WTC11 (cell line): ENCODE measurements at regions of chr19 and their contacts with region 1.

Region 1: DNA sequence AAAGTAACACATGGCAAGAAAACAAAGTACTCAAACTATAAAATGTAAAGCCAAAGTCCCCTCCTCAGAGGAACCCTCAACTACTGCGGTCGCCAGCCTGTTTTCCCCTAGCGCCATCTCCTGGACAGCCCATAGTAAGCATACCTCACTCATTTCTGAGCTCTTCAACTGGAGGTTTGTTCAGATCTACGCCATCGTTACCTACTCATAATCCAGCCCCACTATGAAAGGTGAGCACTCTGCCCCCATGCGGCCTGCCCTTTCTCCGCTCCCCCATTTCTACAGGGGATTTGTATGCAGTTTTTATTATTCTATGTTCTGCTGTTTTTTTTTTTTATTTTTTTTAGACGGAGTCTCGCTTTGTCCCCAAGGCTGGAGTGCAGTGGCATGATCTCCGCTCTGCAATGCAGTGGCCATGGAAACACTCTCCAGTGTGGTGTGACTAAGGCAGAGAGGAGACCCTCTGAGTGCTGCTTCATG is 26.2 kb downstream of the OPA3 start:
- DNase-seq: peak; percentile 78
- ATAC-seq: peak; percentile 89
- H3K4me3 Mint-ChIP-seq: no peak overlapping the region
- H3K27ac Mint-ChIP-seq: no peak overlapping the region
- H3K4me1 Mint-ChIP-seq: peaks cover 12% of the 10 kb centered on the region; the same call in 1 of the 2 replicates
- H3K27me3 Mint-ChIP-seq: no peaks in the 10 kb centered on the region
- CTCF ChIP-seq: no peak

Region 2: GRCh38 chr19:45455707-45456499 is 102.5 kb before region 1 on chr19:
- CTCF ChIA-PET with region 1: no interaction called
- POLR2A ChIA-PET with region 1: no interaction called
- DNase-seq: peak; percentile 78
- ATAC-seq: peak; percentile 93
- H3K4me3 Mint-ChIP-seq: no peak overlapping the region
- H3K27ac Mint-ChIP-seq: peak overlapping the region; percentile 78
- H3K4me1 Mint-ChIP-seq: peaks cover 14% of the 10 kb centered on the region
- H3K27me3 Mint-ChIP-seq: peaks cover 37% of the 10 kb centered on the region
- CTCF ChIP-seq: no peak

Region 3: DNA sequence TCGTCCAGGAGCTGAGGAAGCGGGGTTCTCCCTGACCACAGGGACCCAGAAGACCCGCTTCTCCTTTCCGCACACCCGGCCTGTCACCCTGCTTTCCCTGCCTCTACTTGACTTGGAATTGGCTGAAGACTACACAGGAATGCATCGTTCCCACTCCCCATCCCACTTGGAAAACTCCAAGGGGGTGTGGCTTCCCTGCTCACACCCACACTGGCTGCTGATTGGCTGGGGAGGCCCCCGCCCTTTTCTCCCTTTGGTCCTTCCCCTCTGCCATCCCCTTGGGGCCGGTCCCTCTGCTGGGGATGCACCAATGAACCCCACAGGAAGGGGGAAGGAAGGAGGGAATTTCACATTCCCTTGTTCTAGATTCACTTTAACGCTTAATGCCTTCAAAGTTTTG is 32.3 kb before region 1 on chr19:
- CTCF ChIA-PET with region 1: interaction called, 92 read pairs
- POLR2A ChIA-PET with region 1: interaction called, 5 read pairs
- DNase-seq: peak; percentile 93
- ATAC-seq: peak; percentile 46
- H3K4me3 Mint-ChIP-seq: no peak overlapping the region
- H3K27ac Mint-ChIP-seq: peak overlapping the region; percentile 96
- H3K4me1 Mint-ChIP-seq: peaks cover 19% of the 10 kb centered on the region
- H3K27me3 Mint-ChIP-seq: peaks cover 21% of the 10 kb centered on the region
- CTCF ChIP-seq: no peak

Region 4: GRCh38 chr19:45569619-45570421 is 11.4 kb after region 1 on chr19:
- CTCF ChIA-PET with region 1: interaction called, 17 read pairs
- POLR2A ChIA-PET with region 1: no interaction called
- DNase-seq: peak; percentile 89
- ATAC-seq: peak; percentile 95
- H3K4me3 Mint-ChIP-seq: no peak overlapping the region
- H3K27ac Mint-ChIP-seq: no peak overlapping the region
- H3K4me1 Mint-ChIP-seq: peaks cover 3% of the 10 kb centered on the region
- H3K27me3 Mint-ChIP-seq: no peaks in the 10 kb centered on the region
- CTCF ChIP-seq: peak; percentile 69

Region 5: GRCh38 chr19:45591004-45591637 is 32.7 kb after region 1 on chr19:
- CTCF ChIA-PET with region 1: interaction called, 15 read pairs
- POLR2A ChIA-PET with region 1: no interaction called
- DNase-seq: peak; percentile 84
- ATAC-seq: peak; percentile 95
- H3K4me3 Mint-ChIP-seq: no peak overlapping the region
- H3K27ac Mint-ChIP-seq: no peak overlapping the region
- H3K4me1 Mint-ChIP-seq: peaks cover 6% of the 10 kb centered on the region
- H3K27me3 Mint-ChIP-seq: peaks cover 60% of the 10 kb centered on the region
- CTCF ChIP-seq: no peak

Region 6: DNA sequence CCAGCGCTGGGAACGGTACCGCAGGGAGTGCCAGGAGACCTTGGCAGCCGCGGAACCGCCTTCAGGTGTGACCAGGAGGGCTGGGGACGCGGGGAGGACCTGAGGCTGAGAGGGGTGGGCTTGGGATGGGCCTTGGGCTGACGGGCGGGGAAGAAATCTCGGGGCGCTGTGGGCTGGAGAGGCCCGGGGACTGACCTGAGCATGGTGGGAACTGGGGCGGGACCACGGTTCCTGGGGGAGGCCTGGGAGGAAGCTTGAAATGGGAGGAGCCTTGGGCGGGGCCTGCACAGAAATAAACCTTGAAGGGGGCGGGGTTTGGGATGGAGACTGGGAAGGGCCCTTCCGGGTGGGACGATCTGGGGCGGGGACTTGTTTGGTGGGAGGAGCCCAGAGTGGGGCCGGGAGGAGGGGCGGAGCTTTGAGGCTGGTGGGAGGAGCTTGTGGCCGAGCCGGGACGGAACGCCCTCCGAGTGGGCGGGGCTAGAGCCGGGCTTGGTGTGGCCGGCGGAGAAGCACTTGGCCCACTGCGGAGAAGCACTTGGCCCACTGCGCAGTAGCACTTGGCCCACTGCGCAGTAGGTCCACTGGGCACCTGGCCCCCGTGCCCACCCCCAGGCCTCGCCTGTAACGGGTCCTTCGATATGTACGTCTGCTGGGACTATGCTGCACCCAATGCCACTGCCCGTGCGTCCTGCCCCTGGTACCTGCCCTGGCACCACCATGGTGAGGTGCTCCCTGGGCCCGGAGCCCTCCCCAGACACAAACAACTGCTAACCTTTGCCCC is 112.4 kb after region 1 on chr19:
- CTCF ChIA-PET with region 1: interaction called, 11 read pairs
- POLR2A ChIA-PET with region 1: no interaction called
- DNase-seq: peak; percentile 98
- ATAC-seq: peak; percentile 90
- H3K4me3 Mint-ChIP-seq: peak overlapping the region; percentile 73
- H3K27ac Mint-ChIP-seq: no peak overlapping the region
- H3K4me1 Mint-ChIP-seq: peaks cover 27% of the 10 kb centered on the region
- H3K27me3 Mint-ChIP-seq: peaks cover 72% of the 10 kb centered on the region
- CTCF ChIP-seq: no peak

Region 7: GRCh38 chr19:45994989-45995714 is 436.7 kb after region 1 on chr19 and contains the start of gene CCDC61:
- CTCF ChIA-PET with region 1: no interaction called
- POLR2A ChIA-PET with region 1: no interaction called
- DNase-seq: peak; percentile 97
- ATAC-seq: peak; percentile 96
- H3K4me3 Mint-ChIP-seq: no peak within 1 kb of the TSS
- H3K27ac Mint-ChIP-seq: peak within 1 kb of the TSS; percentile 34
- H3K4me1 Mint-ChIP-seq: peaks cover 16% of the 10 kb centered on the region
- H3K27me3 Mint-ChIP-seq: peaks cover 12% of the 10 kb centered on the region; the same call in 1 of the 2 replicates
- CTCF ChIP-seq: no peak
- total RNA-seq, gene CCDC61: 25.2 to 33.7 TPM (median 26.6 TPM) in 3 replicates